ENCODE measurements at regions of chr12 and their contacts with region 1.

Region 1: DNA sequence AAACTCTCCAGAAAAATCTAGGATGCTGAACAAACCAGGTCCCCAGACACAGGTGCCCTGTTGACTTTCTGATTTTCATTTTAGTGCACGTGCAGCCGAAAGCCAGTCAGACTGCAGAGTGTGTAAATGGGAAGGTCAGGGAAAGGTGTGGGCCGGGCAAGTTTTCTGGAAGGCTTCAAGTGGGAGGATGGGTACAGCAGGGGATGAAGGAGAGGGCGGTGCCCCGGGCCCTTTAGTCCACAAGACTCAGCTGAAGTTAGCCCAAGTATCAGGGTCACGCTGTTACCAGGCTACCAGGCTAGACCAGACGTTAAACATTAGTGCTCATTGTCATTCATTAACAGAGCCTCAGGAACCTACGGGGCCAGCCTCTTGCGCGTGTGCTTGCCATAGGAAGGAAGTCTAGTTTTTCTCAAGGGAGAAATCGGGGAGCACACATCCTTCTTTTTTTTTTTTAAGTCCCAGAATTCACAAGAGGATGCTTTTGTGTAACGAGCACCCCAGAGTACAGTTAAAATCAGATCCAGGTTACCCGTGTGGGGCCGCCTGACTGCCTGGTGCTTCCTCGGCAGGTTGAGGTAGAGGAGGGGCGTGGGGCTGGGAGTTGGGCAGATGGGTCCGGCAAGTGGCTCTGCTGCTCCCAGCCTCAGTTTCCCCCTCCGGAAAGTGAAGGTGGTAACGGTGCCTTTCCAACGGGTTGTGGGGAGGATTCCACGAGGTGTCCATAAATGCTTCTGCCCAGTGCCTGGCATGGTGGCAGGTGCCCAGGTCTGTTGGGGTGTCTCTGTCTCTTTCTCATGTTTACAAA is 19.1 kb downstream of the BCL7A start:
- DNase-seq: peak; percentile 91
- H3K4me3 Mint-ChIP-seq: peak overlapping the region; percentile 62
- H3K27ac Mint-ChIP-seq: peak overlapping the region; percentile 94
- H3K4me1 Mint-ChIP-seq: peaks cover 22% of the 10 kb centered on the region
- H3K27me3 Mint-ChIP-seq: no peaks in the 10 kb centered on the region
- CTCF ChIP-seq: no peak

Region 2: DNA sequence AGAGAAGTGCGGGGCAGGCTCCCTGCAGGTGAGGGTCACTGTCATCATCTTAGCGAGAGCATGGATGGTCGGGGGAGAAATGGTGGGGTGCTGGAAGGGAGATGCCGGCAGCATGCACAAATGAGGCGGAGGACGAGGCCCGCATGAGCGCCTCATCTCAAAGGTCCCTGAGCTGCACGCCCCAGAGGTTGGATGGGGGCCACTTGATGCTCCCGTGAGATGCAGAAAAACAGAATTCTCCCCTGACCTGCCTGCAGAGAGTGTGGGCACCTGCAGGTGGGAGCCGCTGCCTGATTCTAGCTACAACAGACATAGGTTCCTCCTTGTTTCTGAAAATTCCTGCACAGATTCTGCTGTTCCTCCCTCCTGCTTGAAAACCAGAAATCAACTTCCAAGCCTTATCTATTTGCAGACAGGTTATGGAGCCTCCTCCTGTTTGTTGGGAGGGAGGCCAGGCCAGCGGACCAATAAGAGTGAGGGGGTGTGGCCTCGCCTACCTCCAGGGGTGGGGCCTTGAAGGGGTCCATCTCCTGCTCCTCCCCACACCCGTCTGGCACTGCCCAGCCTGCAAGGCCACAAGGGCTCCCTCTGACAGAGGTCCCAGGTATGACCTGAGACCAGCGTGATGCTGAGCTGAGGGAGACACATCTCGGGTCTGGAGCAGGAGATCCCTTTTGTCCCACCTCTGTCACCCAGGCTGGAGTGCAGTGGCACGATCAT is 527.2 kb before region 1 on chr12:
- CTCF ChIA-PET with region 1: no interaction called
- intact Hi-C with region 1: no loop called
- DNase-seq: peak; percentile 83
- H3K4me3 Mint-ChIP-seq: no peak overlapping the region
- H3K27ac Mint-ChIP-seq: no peak overlapping the region
- H3K4me1 Mint-ChIP-seq: peaks cover 9% of the 10 kb centered on the region
- H3K27me3 Mint-ChIP-seq: no peaks in the 10 kb centered on the region
- CTCF ChIP-seq: no peak

Region 3: GRCh38 chr12:121637231-121637914 is 403.4 kb before region 1 on chr12:
- CTCF ChIA-PET with region 1: interaction called, 11 read pairs
- intact Hi-C with region 1: no loop called
- DNase-seq: no peak
- H3K4me3 Mint-ChIP-seq: no peak overlapping the region
- H3K27ac Mint-ChIP-seq: no peak overlapping the region
- H3K4me1 Mint-ChIP-seq: peaks cover under 1% of the 10 kb centered on the region
- H3K27me3 Mint-ChIP-seq: no peaks in the 10 kb centered on the region
- CTCF ChIP-seq: no peak

Region 4: DNA sequence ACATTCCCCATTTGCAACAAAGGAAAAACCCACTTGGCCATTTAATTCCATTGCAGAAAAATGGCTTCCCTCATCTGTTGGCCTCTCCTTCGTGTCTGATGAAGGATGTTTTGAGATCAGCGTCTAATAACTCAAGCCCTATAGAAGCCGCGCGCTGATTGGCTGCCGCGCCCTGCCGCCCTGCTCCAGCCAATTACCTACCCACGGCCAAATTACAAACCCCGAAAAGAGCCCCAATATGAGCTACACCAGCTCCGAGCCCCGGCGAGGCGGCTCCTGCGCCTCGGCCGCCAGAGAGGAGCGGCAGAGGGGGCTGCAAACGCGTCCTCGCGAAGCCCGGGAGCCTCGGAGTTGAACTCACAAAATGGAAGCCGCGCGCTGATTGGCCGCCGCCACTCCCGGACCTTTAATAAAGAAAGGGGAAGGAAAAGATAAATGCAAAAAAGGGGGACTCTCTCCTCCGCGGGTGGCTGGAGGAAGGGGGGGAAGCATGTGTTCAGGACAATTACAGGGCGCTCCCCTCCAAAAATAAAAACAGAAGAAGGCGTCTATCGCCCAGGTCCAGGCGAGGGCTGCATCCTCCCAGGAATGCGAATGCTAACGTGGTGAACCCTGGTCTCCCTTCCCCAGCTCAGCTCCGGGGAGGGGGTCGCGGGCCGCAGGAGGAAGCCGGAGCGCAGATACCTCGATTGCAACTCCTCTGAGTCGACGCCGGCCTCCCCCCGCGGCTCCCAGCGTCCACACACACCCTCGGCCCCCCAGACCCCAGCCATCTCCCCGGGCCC is 237.7 kb before region 1 on chr12:
- CTCF ChIA-PET with region 1: no interaction called
- intact Hi-C with region 1: no loop called
- DNase-seq: peak; percentile 86
- H3K4me3 Mint-ChIP-seq: peak overlapping the region; percentile 76
- H3K27ac Mint-ChIP-seq: peak overlapping the region; percentile 93
- H3K4me1 Mint-ChIP-seq: peaks cover 49% of the 10 kb centered on the region
- H3K27me3 Mint-ChIP-seq: no peaks in the 10 kb centered on the region
- CTCF ChIP-seq: no peak

Region 5: GRCh38 chr12:122013791-122014590 is 26.8 kb before region 1 on chr12:
- CTCF ChIA-PET with region 1: no interaction called
- intact Hi-C with region 1: no loop called
- DNase-seq: no peak
- H3K4me3 Mint-ChIP-seq: no peak overlapping the region
- H3K27ac Mint-ChIP-seq: no peak overlapping the region
- H3K4me1 Mint-ChIP-seq: no peaks in the 10 kb centered on the region
- H3K27me3 Mint-ChIP-seq: no peaks in the 10 kb centered on the region
- CTCF ChIP-seq: no peak

Region 6: GRCh38 chr12:122081697-122082221 is 41.0 kb after region 1 on chr12:
- CTCF ChIA-PET with region 1: interaction called, 3 read pairs
- intact Hi-C with region 1: loop called (anchors 2 kb)
- DNase-seq: no peak
- H3K4me3 Mint-ChIP-seq: peak overlapping the region; percentile 68
- H3K27ac Mint-ChIP-seq: peak overlapping the region; percentile 81
- H3K4me1 Mint-ChIP-seq: peaks cover 31% of the 10 kb centered on the region
- H3K27me3 Mint-ChIP-seq: no peaks in the 10 kb centered on the region
- CTCF ChIP-seq: no peak